Activated naive CD8-positive, alpha-beta T cell treated with anti-CD3 and anti-CD28 coated beads, Interleukin-2, amount 10 ng/mL, durations not matched to agents 7 days and 5 days (primary cell): ENCODE measurements at regions of chr10 and their contacts with region 1.

Region 1: GRCh38 chr10:93509816-93510215 is 13.4 kb downstream of the CEP55 start:
- DNase-seq: no peak
- ATAC-seq: no peak
- H3K4me3 Mint-ChIP-seq: no peak overlapping the region
- H3K27ac Mint-ChIP-seq: no peak overlapping the region
- H3K4me1 Mint-ChIP-seq: peaks cover 1% of the 10 kb centered on the region
- H3K27me3 Mint-ChIP-seq: no peaks in the 10 kb centered on the region

Region 2: DNA sequence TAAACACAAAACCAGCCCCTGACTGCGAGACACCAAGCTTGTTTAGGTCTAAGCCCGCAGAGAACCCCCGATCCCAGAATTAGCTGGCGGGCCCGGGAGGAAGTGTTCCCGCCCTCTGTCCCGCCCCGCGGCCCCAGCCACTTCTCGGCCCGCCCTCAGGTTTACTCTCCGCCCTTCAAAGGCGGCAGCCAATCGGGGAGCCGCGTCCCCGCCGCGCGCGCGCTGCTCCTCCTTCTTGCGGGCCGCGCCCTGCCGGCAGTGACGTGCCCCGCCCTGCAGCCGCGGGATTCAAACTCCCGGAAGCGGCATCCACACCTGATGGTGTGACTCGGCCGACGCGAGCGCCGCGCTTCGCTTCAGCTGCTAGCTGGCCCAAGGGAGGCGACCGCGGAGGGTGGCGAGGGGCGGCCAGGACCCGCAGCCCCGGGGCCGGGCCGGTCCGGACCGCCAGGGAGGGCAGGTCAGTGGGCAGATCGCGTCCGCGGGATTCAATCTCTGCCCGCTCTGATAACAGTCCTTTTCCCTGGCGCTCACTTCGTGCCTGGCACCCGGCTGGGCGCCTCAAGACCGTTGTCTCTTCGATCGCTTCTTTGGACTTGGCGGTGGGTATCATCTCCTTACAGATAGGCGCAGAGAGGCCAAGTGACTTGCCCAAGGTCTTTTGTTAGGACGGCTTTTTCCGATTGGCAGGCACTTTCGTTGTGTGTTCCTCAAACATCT is 13.3 kb before region 1 on chr10 and contains the start of gene CEP55:
- POLR2A ChIA-PET with region 1: interaction called, 17 read pairs
- DNase-seq: peak; percentile 97
- ATAC-seq: peak; percentile 98
- H3K4me3 Mint-ChIP-seq: peak within 1 kb of the TSS; percentile 94
- H3K27ac Mint-ChIP-seq: peak within 1 kb of the TSS; percentile 89
- H3K4me1 Mint-ChIP-seq: peaks cover 28% of the 10 kb centered on the region
- H3K27me3 Mint-ChIP-seq: peaks cover 9% of the 10 kb centered on the region
- total RNA-seq, gene CEP55: 45.9 to 50.7 TPM

Region 3: GRCh38 chr10:93541402-93542357 is 31.9 kb after region 1 on chr10:
- POLR2A ChIA-PET with region 1: no interaction called
- DNase-seq: no peak
- ATAC-seq: no peak
- H3K4me3 Mint-ChIP-seq: no peak overlapping the region
- H3K27ac Mint-ChIP-seq: no peak overlapping the region
- H3K4me1 Mint-ChIP-seq: peaks cover 1% of the 10 kb centered on the region
- H3K27me3 Mint-ChIP-seq: peaks cover 14% of the 10 kb centered on the region